ENCODE measurements at regions of chr3 and their contacts with region 1.

Region 1: GRCh38 chr3:9080163-9080562 is 116.9 kb upstream of the RAD18 start:
- DNase-seq: no peak
- CTCF ChIP-seq: no peak

Region 2: DNA sequence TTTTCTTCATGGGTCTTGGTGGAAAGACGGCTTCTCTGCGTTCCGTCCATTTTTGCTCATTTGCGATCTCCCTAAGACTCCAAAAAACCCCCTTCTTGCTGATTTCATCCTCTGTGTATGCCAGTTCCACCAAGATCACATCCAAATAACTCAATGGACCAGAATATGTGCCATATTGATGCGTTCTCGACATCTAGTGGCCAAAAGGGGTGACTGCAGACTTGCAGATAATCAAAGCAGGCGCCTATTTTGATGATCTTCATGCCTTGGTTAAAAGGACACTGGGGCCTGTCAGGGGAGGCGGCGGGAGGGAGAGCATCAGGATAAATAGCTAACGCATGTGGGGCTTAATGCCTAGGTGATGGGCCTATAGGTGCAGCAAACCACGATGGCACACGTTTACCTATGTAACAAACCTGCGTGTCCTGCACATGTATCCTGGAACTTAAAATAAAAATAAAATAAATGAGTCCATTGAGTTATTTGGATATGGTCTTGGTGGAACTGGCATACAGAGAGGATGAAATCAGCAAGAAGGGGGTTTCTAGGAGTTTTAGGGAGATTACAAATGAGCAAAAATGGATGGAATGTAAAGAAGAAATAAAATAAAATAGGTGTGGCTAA is 12.7 kb before region 1 on chr3:
- CTCF ChIA-PET with region 1: interaction called, 13 read pairs
- POLR2A ChIA-PET with region 1: no interaction called
- DNase-seq: peak; percentile 64
- CTCF ChIP-seq: peak; percentile 73

Measured in GM10248 (cell line).